ENCODE measurements at regions of chr6 and their contacts with region 1.

Region 1: GRCh38 chr6:36666726-36667591 is 11.6 kb upstream of the CDKN1A start:
- DNase-seq: no peak
- ATAC-seq: peak; percentile 18
- H3K4me3 Mint-ChIP-seq: no peak overlapping the region
- H3K27ac Mint-ChIP-seq: no peak overlapping the region
- H3K4me1 Mint-ChIP-seq: peaks cover 38% of the 10 kb centered on the region
- H3K27me3 Mint-ChIP-seq: no peaks in the 10 kb centered on the region
- CTCF ChIP-seq: no peak

Region 2: GRCh38 chr6:34953061-34954025 is 1713.6 kb before region 1 on chr6:
- CTCF ChIA-PET with region 1: no interaction called
- POLR2A ChIA-PET with region 1: no interaction called
- intact Hi-C with region 1: no loop called
- DNase-seq: no peak
- ATAC-seq: no peak
- H3K4me3 Mint-ChIP-seq: no peak overlapping the region
- H3K27ac Mint-ChIP-seq: no peak overlapping the region
- H3K4me1 Mint-ChIP-seq: peaks cover 20% of the 10 kb centered on the region
- H3K27me3 Mint-ChIP-seq: no peaks in the 10 kb centered on the region
- CTCF ChIP-seq: no peak

Region 3: DNA sequence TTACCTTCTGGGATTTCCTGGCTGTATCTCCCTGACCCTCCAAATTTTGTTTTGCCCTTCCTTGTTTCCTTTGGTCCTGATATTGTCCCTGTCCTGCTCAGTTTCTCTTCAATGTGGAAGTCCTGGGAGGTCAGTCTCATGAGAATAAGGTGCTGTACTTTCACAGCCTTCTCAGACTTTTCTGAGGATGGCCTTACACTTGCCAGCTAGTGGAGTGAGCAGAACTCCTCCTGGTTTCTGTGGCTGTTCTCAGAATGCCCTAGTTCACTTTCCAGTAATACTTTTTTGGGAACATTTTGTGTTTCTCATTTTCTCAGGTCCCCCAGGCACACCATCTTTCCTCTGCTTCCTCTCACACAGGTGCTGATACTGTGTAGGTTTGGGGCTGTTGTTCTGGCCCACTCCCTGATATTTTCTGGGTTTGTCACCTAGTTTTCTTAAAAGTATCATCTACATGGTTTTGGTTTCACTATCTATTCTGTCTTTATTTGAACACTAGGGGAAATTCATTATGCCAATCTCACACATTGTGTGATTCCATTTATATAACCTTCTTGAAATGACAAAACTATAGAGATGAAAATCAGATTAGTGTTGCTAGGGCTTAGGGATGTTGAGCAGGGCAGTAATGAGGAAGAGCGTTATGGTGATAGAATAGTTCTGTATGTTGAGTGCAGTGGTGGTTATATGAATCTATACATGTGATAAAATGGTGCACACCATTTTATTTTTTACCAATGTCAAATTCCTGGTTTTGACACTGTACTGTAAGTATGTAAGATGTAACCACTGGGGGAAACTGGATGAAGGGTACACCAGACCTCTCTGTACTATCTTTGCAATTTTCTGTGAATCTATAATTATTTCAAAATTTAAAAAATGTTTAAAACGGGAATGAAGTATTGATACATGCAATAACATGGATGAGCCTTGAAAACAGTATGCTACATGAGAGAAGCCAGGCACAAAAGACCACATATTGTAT is 497.6 kb before region 1 on chr6:
- CTCF ChIA-PET with region 1: no interaction called
- POLR2A ChIA-PET with region 1: interaction called, 12 read pairs
- intact Hi-C with region 1: no loop called
- DNase-seq: no peak
- ATAC-seq: no peak
- H3K4me3 Mint-ChIP-seq: no peak overlapping the region
- H3K27ac Mint-ChIP-seq: peak overlapping the region; percentile 4
- H3K4me1 Mint-ChIP-seq: peaks cover 18% of the 10 kb centered on the region
- H3K27me3 Mint-ChIP-seq: no peaks in the 10 kb centered on the region
- CTCF ChIP-seq: no peak

Region 4: DNA sequence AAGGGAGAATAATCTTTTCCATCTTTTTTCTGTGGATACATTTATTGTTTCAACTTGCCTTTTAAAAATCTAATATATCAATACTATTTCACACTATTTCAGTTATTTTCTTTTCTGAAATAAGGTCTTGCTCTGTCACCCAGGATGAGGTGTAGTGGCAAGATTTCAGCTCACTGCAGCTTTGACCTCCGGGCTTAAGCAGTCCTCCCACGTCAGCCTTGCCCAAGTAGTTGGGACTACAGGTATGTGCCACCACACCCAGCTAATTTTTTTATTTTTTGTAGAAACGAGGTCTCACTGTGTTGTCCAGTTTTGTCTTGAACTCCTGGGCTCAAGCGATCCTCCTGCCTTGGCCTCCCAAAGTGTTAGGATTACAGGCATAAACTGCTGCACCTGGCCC is 215.6 kb before region 1 on chr6:
- CTCF ChIA-PET with region 1: no interaction called
- POLR2A ChIA-PET with region 1: no interaction called
- intact Hi-C with region 1: no loop called
- DNase-seq: no peak
- ATAC-seq: no peak
- H3K4me3 Mint-ChIP-seq: no peak overlapping the region
- H3K27ac Mint-ChIP-seq: no peak overlapping the region
- H3K4me1 Mint-ChIP-seq: peaks cover 23% of the 10 kb centered on the region
- H3K27me3 Mint-ChIP-seq: no peaks in the 10 kb centered on the region
- CTCF ChIP-seq: no peak

Region 5: GRCh38 chr6:36642913-36643817 is 23.8 kb before region 1 on chr6:
- CTCF ChIA-PET with region 1: no interaction called
- POLR2A ChIA-PET with region 1: interaction called, 14 read pairs
- intact Hi-C with region 1: no loop called
- DNase-seq: no peak
- ATAC-seq: no peak
- H3K4me3 Mint-ChIP-seq: no peak overlapping the region
- H3K27ac Mint-ChIP-seq: no peak overlapping the region
- H3K4me1 Mint-ChIP-seq: peaks cover 2% of the 10 kb centered on the region
- H3K27me3 Mint-ChIP-seq: no peaks in the 10 kb centered on the region
- CTCF ChIP-seq: no peak

Region 6: GRCh38 chr6:36650848-36651478 is 16.0 kb before region 1 on chr6:
- CTCF ChIA-PET with region 1: no interaction called
- POLR2A ChIA-PET with region 1: interaction called, 3 read pairs
- intact Hi-C with region 1: loop called (anchors 2 kb)
- DNase-seq: no peak
- ATAC-seq: peak; percentile 89
- H3K4me3 Mint-ChIP-seq: no peak overlapping the region
- H3K27ac Mint-ChIP-seq: peak overlapping the region; percentile 76
- H3K4me1 Mint-ChIP-seq: peaks cover 33% of the 10 kb centered on the region
- H3K27me3 Mint-ChIP-seq: peaks cover 2% of the 10 kb centered on the region
- CTCF ChIP-seq: no peak

Region 7: DNA sequence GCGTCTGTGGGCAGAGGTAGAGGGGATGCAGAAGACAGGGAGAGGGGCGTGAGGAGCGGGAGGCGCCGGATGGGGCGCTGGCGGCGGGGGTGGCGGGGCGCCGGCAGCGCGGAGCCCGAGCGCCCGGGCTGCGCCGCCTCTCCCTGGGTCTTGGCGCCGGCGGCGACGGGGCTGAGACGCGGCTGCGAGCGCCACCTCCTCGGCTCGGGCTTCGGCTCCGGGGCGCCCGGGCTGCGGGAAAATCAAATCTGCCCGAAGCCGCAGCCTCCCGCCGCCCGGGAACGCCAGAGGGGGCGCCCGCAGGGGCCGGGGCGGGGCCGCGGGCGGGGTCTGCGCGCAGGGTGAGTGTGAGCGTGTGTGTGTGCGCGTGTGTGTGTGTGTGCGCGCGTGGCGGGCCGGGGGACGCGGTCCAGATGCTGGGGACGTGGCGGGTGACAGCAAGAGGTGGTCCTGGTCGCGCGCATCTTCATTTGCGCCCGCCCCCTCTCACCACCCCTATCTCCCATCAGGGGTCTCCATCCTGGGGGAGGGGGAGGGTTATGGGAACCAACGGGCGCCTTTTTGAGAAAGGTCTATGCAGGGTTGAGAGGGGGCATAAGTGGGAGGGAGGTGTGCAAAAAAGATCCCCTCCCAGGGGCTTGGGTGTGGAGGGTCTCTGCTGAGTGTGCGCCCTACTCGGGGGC is 172.9 kb after region 1 on chr6:
- CTCF ChIA-PET with region 1: no interaction called
- POLR2A ChIA-PET with region 1: no interaction called
- intact Hi-C with region 1: no loop called
- DNase-seq: peak; percentile 36
- ATAC-seq: peak; percentile 73
- H3K4me3 Mint-ChIP-seq: peak overlapping the region; percentile 81
- H3K27ac Mint-ChIP-seq: no peak overlapping the region
- H3K4me1 Mint-ChIP-seq: peaks cover 15% of the 10 kb centered on the region
- H3K27me3 Mint-ChIP-seq: peaks cover 28% of the 10 kb centered on the region
- CTCF ChIP-seq: no peak

Measured in activated B cell treated with CpG ODN at 0.5 μM for 24 hours (primary cell).